SK-N-SH (cell line): ENCODE measurements at regions of chr5 and their contacts with region 1.

Region 1: DNA sequence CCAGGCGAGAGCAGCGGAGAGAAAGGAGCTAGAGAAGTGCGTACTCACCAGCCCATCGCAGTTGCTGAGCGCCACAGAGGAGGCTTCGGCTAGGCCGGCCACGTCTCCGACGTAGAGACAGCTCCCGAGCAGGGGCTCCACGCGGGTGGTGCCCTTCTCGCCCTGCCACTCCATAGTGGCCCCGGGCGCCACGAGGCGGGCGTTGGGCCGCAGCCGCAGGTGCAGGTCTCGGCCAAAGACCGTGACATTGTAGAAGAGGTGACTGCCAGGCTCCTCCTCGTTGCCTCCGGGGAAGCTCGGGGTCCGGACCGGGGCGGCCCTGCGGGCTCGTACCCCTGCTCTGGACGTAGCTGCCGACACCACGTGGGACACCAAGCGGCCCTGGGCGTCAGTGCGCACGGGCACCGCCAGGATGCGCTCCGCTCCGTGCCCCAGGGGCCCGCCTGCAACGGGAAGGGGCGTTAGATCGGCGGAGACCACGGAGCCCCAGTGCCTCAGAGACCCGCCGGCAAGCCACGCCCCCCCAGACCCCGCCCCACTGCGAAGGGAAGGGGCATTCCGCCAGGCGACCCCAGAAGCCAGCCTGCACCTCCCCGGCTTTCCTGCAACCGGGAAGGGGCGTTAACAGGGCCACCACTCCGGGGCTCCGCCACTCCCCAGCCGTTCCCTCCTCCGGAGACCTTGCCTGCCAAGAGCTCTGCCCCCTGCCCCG is 1.4 kb downstream of the ADAMTS2 start:
- DNase-seq: peak; percentile 85
- H3K4me3 ChIP-seq: peak overlapping the region in 1 of 2 experiments; percentile 58; a peak in 2 of 4 replicates
- H3K27ac ChIP-seq: peak overlapping the region in 1 of 2 experiments; percentile 90; a peak in 2 of 4 replicates
- H3K4me1 ChIP-seq: peaks cover 0 to 51% of the 10 kb centered on the region in 2 experiments; a peak in 1 of 4 replicates
- H3K27me3 ChIP-seq: no peaks in the 10 kb centered on the region
- CTCF ChIP-seq: no peak
- EP300 ChIP-seq: no peak
- RAD21 ChIP-seq: peak; percentile 46

Region 2: GRCh38 chr5:179265514-179266290 is 78.2 kb before region 1 on chr5:
- CTCF ChIA-PET with region 1: interaction called, 13 read pairs
- POLR2A ChIA-PET with region 1: no interaction called
- DNase-seq: peak; percentile 70
- H3K4me3 ChIP-seq: no peak overlapping the region
- H3K27ac ChIP-seq: peak overlapping the region in 1 of 2 experiments; percentile 96; a peak in 2 of 4 replicates
- H3K4me1 ChIP-seq: peaks cover 0 to 95% of the 10 kb centered on the region in 2 experiments; a peak in 2 of 4 replicates
- H3K27me3 ChIP-seq: no peaks in the 10 kb centered on the region
- CTCF ChIP-seq: no peak
- EP300 ChIP-seq: no peak
- RAD21 ChIP-seq: no peak

Region 3: GRCh38 chr5:179275941-179276837 is 67.7 kb before region 1 on chr5:
- CTCF ChIA-PET with region 1: interaction called, 15 read pairs
- POLR2A ChIA-PET with region 1: no interaction called
- DNase-seq: no peak
- H3K4me3 ChIP-seq: no peak overlapping the region
- H3K27ac ChIP-seq: peak overlapping the region in 1 of 2 experiments; percentile 75; a peak in 1 of 4 replicates
- H3K4me1 ChIP-seq: peaks cover 0 to 84% of the 10 kb centered on the region in 2 experiments; a peak in 1 of 4 replicates
- H3K27me3 ChIP-seq: no peaks in the 10 kb centered on the region
- CTCF ChIP-seq: no peak
- EP300 ChIP-seq: no peak
- RAD21 ChIP-seq: no peak

Region 4: GRCh38 chr5:179326127-179326927 is 17.5 kb before region 1 on chr5:
- CTCF ChIA-PET with region 1: interaction called, 15 read pairs
- POLR2A ChIA-PET with region 1: interaction called, 3 read pairs
- DNase-seq: peak; percentile 92
- H3K4me3 ChIP-seq: no peak overlapping the region
- H3K27ac ChIP-seq: peak overlapping the region in 1 of 2 experiments; percentile 96; a peak in 2 of 4 replicates
- H3K4me1 ChIP-seq: peaks cover 0 to 75% of the 10 kb centered on the region in 2 experiments; a peak in 2 of 4 replicates
- H3K27me3 ChIP-seq: no peaks in the 10 kb centered on the region
- CTCF ChIP-seq: no peak
- EP300 ChIP-seq: no peak
- RAD21 ChIP-seq: no peak

Region 5: DNA sequence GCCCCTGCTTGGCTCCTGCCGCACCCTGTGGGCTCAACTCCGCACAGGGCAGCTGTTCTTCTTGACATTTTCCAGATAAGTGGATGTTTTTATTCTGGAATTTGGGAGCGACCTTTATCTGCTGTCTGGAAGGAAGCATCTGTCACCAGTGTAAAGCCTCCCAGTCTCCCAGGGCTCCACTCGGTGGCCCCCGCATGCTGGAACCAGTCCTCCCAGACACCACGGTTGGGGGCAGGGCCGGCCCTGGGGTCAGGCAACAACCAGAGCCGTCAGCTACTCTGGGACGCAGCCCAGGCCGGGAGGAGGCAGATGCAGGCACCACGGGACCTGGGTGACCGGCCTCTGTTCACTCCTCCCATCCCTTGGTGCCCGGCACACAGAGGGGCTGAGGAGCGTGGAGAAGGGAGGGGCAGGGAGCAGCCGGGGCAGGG is 94.2 kb after region 1 on chr5:
- CTCF ChIA-PET with region 1: interaction called, 21 read pairs
- POLR2A ChIA-PET with region 1: no interaction called
- DNase-seq: peak; percentile 91
- H3K4me3 ChIP-seq: no peak overlapping the region
- H3K27ac ChIP-seq: peak overlapping the region in 1 of 2 experiments; percentile 99; a peak in 2 of 4 replicates
- H3K4me1 ChIP-seq: peaks cover 0 to 54% of the 10 kb centered on the region in 2 experiments; a peak in 1 of 4 replicates
- H3K27me3 ChIP-seq: no peaks in the 10 kb centered on the region
- CTCF ChIP-seq: no peak
- EP300 ChIP-seq: peak in 1 of 2 experiments; percentile 91; a peak in 2 of 4 replicates
- RAD21 ChIP-seq: peak; percentile 30